Heart left ventricle (tissue), 16 donors: ENCODE measurements at regions of chr12 and their contacts with region 1.

Region 1: GRCh38 chr12:27969624-27970400 is 2.7 kb downstream of the PTHLH start:
- DNase-seq: peak; percentile 32 to 65 (median 50)
- ATAC-seq: peak in 3 of 4 donors; percentile 54 to 57 (median 57)
- H3K4me3 ChIP-seq: peak overlapping the region; percentile 34 to 66 (median 54)
- H3K27ac ChIP-seq: peak overlapping the region in 5 of 12 donors; percentile 25 to 60 (median 57)
- H3K4me1 ChIP-seq: peaks cover 0 to 27% (median 14%) of the 10 kb centered on the region in 12 donors
- H3K27me3 ChIP-seq: peaks cover 13 to 84% (median 60%) of the 10 kb centered on the region in 9 donors
- CTCF ChIP-seq: peak in 1 of 12 donors; percentile 37
- POLR2A ChIP-seq: no peak

Region 2: GRCh38 chr12:28172434-28173030 is 202.7 kb after region 1 on chr12:
- intact Hi-C with region 1: loop called in 2 of 10 experiments (anchors 10 kb)
- DNase-seq: no peak
- ATAC-seq: peak in 2 of 4 donors; percentile 31 to 39
- H3K4me3 ChIP-seq: no peak overlapping the region
- H3K27ac ChIP-seq: no peak overlapping the region
- H3K4me1 ChIP-seq: no peaks in the 10 kb centered on the region
- H3K27me3 ChIP-seq: no peaks in the 10 kb centered on the region
- CTCF ChIP-seq: peak in 11 of 12 donors; percentile 11 to 60 (median 35)
- POLR2A ChIP-seq: no peak